ENCODE measurements at regions of chr17 and their contacts with region 1.

Region 1: DNA sequence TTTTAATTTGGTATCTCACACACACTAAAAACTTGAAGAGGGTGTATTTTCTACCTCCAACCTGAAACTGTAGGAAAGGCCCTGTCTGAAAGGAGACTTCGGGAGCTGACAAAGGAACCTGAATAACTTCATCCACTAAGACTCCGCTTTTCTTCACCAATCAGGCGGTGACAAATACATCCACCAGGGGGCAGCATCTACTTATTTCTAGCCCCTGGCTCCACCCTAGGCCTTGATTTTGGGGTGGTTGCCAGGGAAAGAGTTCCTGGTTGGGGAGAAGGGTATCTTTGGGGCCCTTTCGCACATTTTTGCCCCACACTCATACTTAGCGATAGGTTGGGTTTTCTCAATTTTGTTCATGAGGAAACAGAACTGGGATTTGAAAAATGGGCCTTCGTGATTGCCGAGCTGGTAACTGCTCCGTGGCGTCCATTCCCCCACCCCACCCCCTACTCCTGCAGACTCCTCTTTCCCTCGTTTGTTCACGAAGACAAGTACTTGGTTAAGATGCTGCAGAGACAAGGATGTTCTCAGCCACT is 4.8 kb upstream of the ARL4D start:
- DNase-seq: peak; percentile 94
- ATAC-seq: peak; percentile 74
- H3K4me3 Mint-ChIP-seq: no peak overlapping the region
- H3K27ac Mint-ChIP-seq: peak overlapping the region; percentile 87; the same call in 1 of the 2 replicates
- H3K4me1 Mint-ChIP-seq: peaks cover 11% of the 10 kb centered on the region; the same call in 1 of the 2 replicates
- H3K27me3 Mint-ChIP-seq: no peaks in the 10 kb centered on the region
- CTCF ChIP-seq: peak; percentile 83

Region 2: DNA sequence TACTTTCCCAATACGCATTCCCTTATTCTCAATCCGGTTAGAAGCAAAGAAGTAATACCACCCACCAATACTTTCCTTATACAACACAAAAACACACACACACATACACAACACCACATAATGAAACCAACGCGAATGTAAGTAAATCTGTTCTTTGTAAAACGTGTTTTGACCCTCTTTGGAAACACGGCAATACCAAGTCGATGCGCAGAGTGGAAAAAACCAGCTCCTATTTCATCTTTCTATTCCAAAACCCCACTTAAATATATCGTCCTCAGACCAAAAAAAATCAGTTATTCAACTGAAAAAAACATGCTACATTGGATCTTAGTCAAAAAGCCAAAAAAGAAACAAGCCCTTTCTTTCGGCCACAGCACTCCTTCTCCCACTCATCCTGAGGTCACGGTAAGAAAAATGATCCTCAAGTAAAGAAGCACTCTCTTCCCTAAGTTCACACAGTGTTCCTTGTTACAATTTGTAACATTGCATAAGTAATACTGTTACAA is 26.2 kb before region 1 on chr17:
- CTCF ChIA-PET with region 1: interaction called, 24 read pairs
- POLR2A ChIA-PET with region 1: interaction called, 43 read pairs
- DNase-seq: no peak
- ATAC-seq: peak; percentile 14
- H3K4me3 Mint-ChIP-seq: peak overlapping the region; percentile 74
- H3K27ac Mint-ChIP-seq: peak overlapping the region; percentile 100
- H3K4me1 Mint-ChIP-seq: peaks cover 39% of the 10 kb centered on the region
- H3K27me3 Mint-ChIP-seq: no peaks in the 10 kb centered on the region
- CTCF ChIP-seq: no peak

Region 3: DNA sequence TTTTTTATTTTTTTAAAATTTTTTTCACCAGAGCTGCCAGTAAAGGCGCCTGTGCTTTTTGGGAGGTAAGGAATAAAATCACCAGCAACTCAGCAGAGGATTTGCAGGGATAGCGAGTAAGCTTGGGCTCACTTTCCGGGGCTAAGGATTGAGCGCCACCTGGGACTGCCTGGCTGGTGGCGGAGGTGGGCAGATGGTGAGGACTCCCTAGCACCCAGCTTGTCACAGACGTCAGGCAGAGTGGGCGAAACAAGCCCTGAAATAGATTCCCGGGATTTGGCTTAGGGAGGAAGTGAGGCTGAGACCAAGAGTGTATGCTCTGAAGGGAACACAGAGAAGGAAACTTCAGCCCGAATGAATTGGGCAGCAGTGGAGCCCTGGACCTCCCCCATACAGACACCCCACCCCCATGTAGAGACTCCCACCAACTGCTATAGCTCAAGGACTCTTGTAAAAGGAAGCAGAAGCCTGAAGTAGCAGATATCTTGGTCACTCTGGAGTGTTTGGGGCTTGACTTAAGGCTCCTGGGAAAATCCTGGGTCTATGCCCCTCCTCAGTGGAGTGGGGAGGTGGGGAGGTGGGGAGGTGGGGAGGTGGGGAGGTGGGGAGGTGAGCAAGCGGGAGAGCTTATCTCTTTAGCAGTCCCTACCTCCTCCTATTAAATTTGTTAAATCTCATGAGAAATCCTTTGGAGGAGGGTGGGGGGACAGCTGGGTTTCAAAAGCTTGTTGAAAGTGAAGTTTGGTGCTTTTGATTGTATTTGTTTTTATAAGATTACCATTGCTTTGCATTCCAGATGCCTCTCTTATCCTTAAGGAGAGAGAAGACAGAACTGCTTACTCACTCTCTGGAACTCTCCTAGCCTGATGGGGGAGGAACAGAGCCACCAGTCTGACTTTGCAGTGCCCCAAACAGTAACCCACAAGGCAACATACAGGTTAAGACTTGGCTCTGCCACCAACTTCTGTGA is 12.9 kb after region 1 on chr17:
- CTCF ChIA-PET with region 1: interaction called, 34 read pairs
- POLR2A ChIA-PET with region 1: interaction called, 4 read pairs
- DNase-seq: no peak
- ATAC-seq: peak; percentile 55
- H3K4me3 Mint-ChIP-seq: no peak overlapping the region
- H3K27ac Mint-ChIP-seq: no peak overlapping the region; the same call in 1 of the 2 replicates
- H3K4me1 Mint-ChIP-seq: peaks cover 12% of the 10 kb centered on the region
- H3K27me3 Mint-ChIP-seq: no peaks in the 10 kb centered on the region
- CTCF ChIP-seq: no peak

Region 4: GRCh38 chr17:43412166-43412565 is 18.2 kb after region 1 on chr17:
- CTCF ChIA-PET with region 1: interaction called, 34 read pairs
- POLR2A ChIA-PET with region 1: interaction called, 5 read pairs
- DNase-seq: no peak
- ATAC-seq: no peak
- H3K4me3 Mint-ChIP-seq: no peak overlapping the region
- H3K27ac Mint-ChIP-seq: no peak overlapping the region
- H3K4me1 Mint-ChIP-seq: peaks cover 17% of the 10 kb centered on the region
- H3K27me3 Mint-ChIP-seq: peaks cover 2% of the 10 kb centered on the region; the same call in 1 of the 2 replicates
- CTCF ChIP-seq: no peak

Region 5: GRCh38 chr17:43428524-43428923 is 34.5 kb after region 1 on chr17:
- CTCF ChIA-PET with region 1: interaction called, 33 read pairs
- POLR2A ChIA-PET with region 1: interaction called, 4 read pairs
- DNase-seq: no peak
- ATAC-seq: no peak
- H3K4me3 Mint-ChIP-seq: no peak overlapping the region
- H3K27ac Mint-ChIP-seq: no peak overlapping the region
- H3K4me1 Mint-ChIP-seq: peaks cover 14% of the 10 kb centered on the region
- H3K27me3 Mint-ChIP-seq: no peaks in the 10 kb centered on the region
- CTCF ChIP-seq: no peak

Region 6: GRCh38 chr17:43477832-43478634 is 84.0 kb after region 1 on chr17:
- CTCF ChIA-PET with region 1: interaction called, 178 read pairs
- POLR2A ChIA-PET with region 1: interaction called, 3 read pairs
- DNase-seq: no peak
- ATAC-seq: peak; percentile 38
- H3K4me3 Mint-ChIP-seq: no peak overlapping the region
- H3K27ac Mint-ChIP-seq: no peak overlapping the region
- H3K4me1 Mint-ChIP-seq: peaks cover 21% of the 10 kb centered on the region
- H3K27me3 Mint-ChIP-seq: no peaks in the 10 kb centered on the region
- CTCF ChIP-seq: no peak

Region 7: DNA sequence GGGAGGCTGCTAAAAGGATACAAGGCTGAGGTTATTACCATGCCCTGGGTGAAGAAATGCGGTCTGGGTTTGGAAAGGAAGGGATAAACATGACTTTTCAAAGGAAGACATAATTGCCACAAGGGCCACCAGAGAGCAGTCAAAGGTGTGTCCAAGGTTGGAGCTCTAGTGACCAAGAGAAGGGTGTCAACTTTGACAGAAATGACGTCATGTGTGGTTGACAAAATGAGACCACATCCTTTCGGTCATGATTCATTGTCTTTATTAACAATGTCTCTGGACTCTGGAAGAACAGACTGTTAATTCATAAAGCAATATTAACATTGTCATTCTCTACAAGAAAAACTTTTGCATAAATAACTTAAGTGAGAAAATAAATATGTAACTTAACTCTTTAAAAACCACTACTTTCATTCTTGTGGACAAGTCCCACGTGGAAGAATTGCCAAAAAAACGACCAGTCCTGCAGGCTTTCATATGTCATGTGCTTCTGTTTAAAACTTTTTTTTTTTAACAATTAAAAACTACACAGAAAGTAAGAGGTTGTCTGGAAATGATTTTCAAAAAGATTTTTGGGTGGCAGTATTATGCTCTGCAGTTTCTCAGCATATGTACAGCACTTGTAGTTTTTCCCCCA is 359.6 kb after region 1 on chr17:
- CTCF ChIA-PET with region 1: no interaction called
- POLR2A ChIA-PET with region 1: no interaction called
- DNase-seq: no peak
- ATAC-seq: no peak
- H3K4me3 Mint-ChIP-seq: no peak overlapping the region
- H3K27ac Mint-ChIP-seq: no peak overlapping the region
- H3K4me1 Mint-ChIP-seq: peaks cover 24% of the 10 kb centered on the region
- H3K27me3 Mint-ChIP-seq: peaks cover 29% of the 10 kb centered on the region
- CTCF ChIP-seq: no peak